ENCODE measurements at regions of chr7 and their contacts with region 1.

Region 1: GRCh38 chr7:143008007-143008901 is 18.7 kb downstream of the OR9A2 start:
- DNase-seq: peak; percentile 83 to 93
- ATAC-seq: peak; percentile 94
- H3K4me3 ChIP-seq: no peak overlapping the region
- H3K27ac ChIP-seq: no peak overlapping the region
- H3K4me1 ChIP-seq: no peaks in the 10 kb centered on the region
- H3K27me3 ChIP-seq: no peaks in the 10 kb centered on the region

Region 2: GRCh38 chr7:142853739-142854371 is 154.4 kb before region 1 on chr7:
- intact Hi-C with region 1: loop called (anchors 2 to 5 kb)
- DNase-seq: peak in 1 of 2 donors; percentile 81
- ATAC-seq: peak; percentile 83
- H3K4me3 ChIP-seq: peak overlapping the region; percentile 46 to 87
- H3K27ac ChIP-seq: no peak overlapping the region
- H3K4me1 ChIP-seq: no peaks in the 10 kb centered on the region
- H3K27me3 ChIP-seq: no peaks in the 10 kb centered on the region

Region 3: GRCh38 chr7:143054621-143055020 is 46.4 kb after region 1 on chr7:
- intact Hi-C with region 1: no loop called
- DNase-seq: no peak
- ATAC-seq: no peak
- H3K4me3 ChIP-seq: no peak overlapping the region
- H3K27ac ChIP-seq: no peak overlapping the region
- H3K4me1 ChIP-seq: no peaks in the 10 kb centered on the region
- H3K27me3 ChIP-seq: no peaks in the 10 kb centered on the region

Region 4: GRCh38 chr7:143147072-143147694 is 138.9 kb after region 1 on chr7:
- intact Hi-C with region 1: no loop called
- DNase-seq: no peak
- ATAC-seq: no peak
- H3K4me3 ChIP-seq: no peak overlapping the region
- H3K27ac ChIP-seq: no peak overlapping the region
- H3K4me1 ChIP-seq: no peaks in the 10 kb centered on the region
- H3K27me3 ChIP-seq: no peaks in the 10 kb centered on the region

Region 5: DNA sequence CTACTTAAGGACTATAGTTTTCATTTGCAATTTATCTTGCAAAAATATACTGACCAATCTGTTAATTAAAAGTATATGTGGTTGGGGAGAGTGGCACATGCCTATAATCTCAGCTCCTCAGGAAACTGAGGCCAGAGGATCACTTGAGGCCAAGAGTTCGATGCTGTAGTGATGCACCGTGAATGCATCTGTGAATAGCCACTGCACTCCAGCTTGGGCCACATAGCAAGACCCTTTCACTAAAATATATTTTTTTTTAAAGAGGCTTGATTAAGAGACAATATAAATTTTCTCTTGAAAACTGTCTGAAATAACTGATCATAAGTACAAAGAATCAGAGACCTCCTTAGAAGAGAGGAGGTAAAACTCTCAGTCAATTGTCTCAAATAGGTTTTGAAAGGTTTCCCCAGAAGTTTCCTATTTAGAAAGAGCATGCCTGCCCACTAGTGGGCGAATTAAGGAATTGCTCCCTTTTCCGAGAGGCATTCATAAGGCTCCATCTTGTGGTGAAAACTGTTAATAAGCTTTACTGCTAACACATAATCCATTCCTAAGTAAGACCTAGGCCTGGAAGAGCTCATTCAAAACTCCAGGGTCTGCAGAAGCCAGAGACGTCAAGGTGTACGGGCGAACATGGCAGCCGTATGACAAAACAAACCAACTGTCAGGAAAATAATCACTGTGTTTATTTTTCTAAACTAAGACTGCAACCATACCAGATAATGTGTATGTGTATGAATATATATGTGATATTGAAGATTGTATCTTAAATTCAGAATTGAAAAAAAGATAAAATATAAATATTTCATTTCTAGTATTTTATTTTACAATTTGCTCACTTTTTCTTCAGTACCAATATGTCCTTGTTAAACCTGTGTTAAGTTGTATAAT is 206.8 kb after region 1 on chr7:
- intact Hi-C with region 1: loop called (anchors 1 to 2 kb)
- DNase-seq: peak in 1 of 2 donors; percentile 60
- ATAC-seq: peak; percentile 92
- H3K4me3 ChIP-seq: no peak overlapping the region
- H3K27ac ChIP-seq: no peak overlapping the region
- H3K4me1 ChIP-seq: no peaks in the 10 kb centered on the region
- H3K27me3 ChIP-seq: no peaks in the 10 kb centered on the region

Region 6: DNA sequence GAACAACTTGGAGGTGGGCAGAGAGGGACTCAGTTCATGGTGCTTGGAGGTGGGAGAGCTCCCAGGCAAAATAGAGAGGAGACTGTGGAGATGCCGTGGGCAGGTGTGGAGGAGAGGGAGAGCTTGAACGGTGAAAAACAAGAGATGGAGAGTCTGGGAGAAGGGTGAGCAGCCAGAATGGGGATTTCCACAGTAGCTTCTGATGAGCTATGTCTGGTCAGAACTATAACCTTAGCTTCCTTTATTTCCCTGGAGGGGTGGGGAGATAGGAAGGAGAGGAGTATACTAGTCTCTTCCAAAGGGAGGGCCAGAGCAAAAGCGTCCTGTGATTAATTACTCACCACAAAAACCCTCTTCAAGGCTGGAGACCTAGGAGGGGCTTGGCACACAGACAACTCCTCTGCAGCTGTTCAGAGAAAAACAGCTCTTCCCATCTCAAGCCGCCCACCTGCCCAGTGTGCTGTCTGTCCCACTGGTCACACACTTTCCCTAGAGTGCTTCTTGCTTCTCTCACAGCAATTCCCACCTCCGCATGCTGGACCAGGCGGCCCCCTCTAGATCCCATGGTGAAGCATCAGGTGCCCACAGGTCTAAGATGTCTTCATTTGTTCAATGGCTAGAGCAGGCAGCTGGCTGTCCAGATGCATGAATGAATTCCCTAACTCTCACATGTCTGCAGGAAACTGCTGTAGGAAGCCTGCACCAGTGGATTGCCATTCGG is 511.3 kb after region 1 on chr7:
- intact Hi-C with region 1: no loop called
- DNase-seq: no peak
- ATAC-seq: no peak
- H3K4me3 ChIP-seq: no peak overlapping the region
- H3K27ac ChIP-seq: no peak overlapping the region
- H3K4me1 ChIP-seq: no peaks in the 10 kb centered on the region
- H3K27me3 ChIP-seq: no peaks in the 10 kb centered on the region

Measured in aorta (tissue), 5 donors.